Activated CD8-positive, alpha-beta T cell treated with anti-CD3 and anti-CD28 coated beads, Interleukin-2, amount 10 ng/mL, durations not matched to agents 7 days and 5 days (primary cell): ENCODE measurements at regions of chr2 and their contacts with region 1.

Region 1: DNA sequence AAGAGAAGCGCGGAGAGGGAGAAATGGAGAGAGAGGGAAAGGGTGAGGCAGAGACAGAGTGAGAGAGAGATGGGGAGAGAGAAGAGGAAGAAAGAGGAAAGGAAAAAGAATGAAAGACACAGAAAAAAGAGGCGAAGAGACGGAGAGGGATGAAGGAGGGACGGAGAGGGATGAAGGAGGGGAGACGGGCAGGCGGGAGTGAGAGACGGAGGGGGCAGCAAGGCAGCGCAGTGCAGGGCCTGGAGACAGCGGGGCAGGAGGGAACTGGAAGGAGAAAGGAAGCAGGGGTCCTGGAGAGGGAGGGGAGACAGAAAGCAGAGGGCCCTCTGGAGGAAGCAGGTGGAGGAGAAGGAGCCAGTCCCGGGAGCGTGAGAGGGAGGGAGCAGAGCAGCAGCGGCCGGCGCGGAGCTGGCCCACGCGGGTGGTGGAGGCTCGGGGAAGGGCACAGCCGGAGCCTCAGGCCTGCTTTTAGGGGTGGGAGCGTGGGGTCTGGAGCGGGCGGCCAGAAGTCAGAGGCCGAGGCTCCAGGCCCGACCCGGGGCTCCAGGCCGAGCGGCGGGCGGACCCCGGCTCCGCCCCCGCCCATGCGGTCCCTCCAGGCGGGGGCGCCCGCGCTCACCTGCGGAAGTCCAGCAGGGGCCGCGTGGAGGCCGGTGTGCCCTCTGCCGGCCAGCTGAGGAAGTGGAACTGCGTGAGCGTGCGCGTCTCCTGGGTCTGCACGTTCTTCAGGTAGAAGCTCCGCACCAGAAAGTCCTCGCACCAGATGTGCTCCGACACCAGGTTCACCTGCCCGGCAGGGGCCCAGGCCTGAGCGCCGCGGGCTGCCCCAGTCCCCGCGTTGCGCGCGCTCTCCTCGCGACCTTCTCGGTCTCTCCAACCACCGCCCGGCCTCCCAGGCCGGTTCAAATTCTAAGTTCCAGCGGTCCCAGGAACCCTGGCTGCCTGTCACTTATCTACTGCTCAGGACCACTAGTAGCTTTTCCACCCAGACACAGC is 14.5 kb downstream of the PTPRN start:
- DNase-seq: peak; percentile 91
- ATAC-seq: peak; percentile 89
- H3K4me3 Mint-ChIP-seq: peak overlapping the region; percentile 51
- H3K27ac Mint-ChIP-seq: peak overlapping the region; percentile 66
- H3K4me1 Mint-ChIP-seq: peaks cover 34% of the 10 kb centered on the region
- H3K27me3 Mint-ChIP-seq: peaks cover 6% of the 10 kb centered on the region

Region 2: DNA sequence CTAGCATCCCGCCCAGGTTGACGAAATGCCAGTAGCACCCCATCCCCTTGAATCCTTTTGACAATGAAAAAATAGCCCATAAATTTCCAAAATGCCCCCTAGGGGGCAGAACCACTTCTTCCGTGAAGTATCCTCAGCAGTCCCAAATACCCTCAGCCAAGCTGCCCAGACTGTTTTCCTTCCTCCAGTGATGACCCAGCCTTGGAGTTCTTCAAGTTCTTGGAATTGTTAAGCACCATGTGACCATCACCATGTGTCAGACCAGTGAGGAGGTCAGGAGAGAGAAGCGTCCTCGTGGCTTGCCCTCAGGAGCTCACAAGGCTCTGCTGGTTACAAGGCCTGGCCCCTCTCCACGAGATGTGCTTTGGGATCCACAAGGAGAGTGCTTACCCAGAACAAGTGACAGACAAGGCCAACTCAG is 123.4 kb before region 1 on chr2:
- CTCF ChIA-PET with region 1: interaction called, 32 read pairs
- POLR2A ChIA-PET with region 1: interaction called, 3 read pairs
- DNase-seq: peak; percentile 54
- ATAC-seq: peak; percentile 50
- H3K4me3 Mint-ChIP-seq: no peak overlapping the region
- H3K27ac Mint-ChIP-seq: no peak overlapping the region
- H3K4me1 Mint-ChIP-seq: peaks cover 30% of the 10 kb centered on the region
- H3K27me3 Mint-ChIP-seq: no peaks in the 10 kb centered on the region

Region 3: GRCh38 chr2:219218732-219219701 is 75.6 kb before region 1 on chr2 and contains the start of gene ABCB6:
- CTCF ChIA-PET with region 1: interaction called, 10 read pairs
- POLR2A ChIA-PET with region 1: no interaction called
- DNase-seq: peak; percentile 87
- ATAC-seq: peak; percentile 77
- H3K4me3 Mint-ChIP-seq: peak within 1 kb of the TSS; percentile 77
- H3K27ac Mint-ChIP-seq: peak within 1 kb of the TSS; percentile 75
- H3K4me1 Mint-ChIP-seq: peaks cover 26% of the 10 kb centered on the region
- H3K27me3 Mint-ChIP-seq: no peaks in the 10 kb centered on the region
- total RNA-seq, gene ABCB6: 11.6 to 11.9 TPM

Region 4: DNA sequence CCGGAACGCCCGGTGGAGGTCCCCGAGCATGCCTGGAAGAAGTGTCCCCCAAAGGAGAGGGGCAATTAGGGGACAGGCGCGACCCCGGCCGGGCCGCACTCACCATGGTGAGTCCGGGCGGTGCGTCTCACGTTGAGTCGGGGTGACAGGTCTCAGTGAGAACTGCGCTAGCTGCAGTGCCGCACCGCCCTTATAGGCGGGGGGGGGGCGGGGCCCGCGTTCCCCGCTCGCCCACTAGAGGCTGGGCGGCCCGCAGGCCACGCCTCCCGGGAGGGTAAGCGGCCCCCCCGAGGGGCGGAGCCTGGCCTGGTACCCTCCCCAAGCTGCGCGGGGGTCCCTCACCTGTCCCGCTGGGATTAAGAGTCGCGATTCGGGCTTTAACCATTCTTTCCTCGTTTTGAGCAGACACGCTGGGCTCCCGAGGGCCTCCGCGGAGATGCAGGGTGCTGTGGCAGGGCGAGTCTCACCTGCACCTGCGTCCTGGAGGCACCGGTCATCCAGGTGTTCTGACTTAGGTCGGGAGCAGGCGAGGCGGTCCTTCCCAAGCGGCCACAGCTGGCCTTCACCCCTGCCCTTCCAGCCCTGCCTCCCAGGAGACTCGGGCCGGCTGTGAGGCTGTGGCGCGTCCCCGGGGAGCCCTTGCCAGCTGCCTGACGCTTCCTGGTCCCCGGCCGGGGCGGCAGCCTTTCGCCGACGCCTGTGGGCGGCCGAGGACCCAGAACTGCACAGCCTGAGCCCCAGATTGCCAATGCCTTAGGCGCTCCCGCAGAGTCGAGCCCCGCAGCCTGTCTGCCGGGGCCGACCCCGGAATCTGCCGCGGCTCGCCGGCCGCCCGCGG is 40.7 kb before region 1 on chr2 and contains the start of gene TUBA4A:
- CTCF ChIA-PET with region 1: interaction called, 60 read pairs
- POLR2A ChIA-PET with region 1: interaction called, 29 read pairs
- DNase-seq: peak; percentile 91
- ATAC-seq: peak; percentile 80
- H3K4me3 Mint-ChIP-seq: peak within 1 kb of the TSS; percentile 99
- H3K27ac Mint-ChIP-seq: peak within 1 kb of the TSS; percentile 100
- H3K4me1 Mint-ChIP-seq: peaks cover 44% of the 10 kb centered on the region
- H3K27me3 Mint-ChIP-seq: no peaks in the 10 kb centered on the region
- total RNA-seq, gene TUBA4A: 286 to 292 TPM

Region 5: DNA sequence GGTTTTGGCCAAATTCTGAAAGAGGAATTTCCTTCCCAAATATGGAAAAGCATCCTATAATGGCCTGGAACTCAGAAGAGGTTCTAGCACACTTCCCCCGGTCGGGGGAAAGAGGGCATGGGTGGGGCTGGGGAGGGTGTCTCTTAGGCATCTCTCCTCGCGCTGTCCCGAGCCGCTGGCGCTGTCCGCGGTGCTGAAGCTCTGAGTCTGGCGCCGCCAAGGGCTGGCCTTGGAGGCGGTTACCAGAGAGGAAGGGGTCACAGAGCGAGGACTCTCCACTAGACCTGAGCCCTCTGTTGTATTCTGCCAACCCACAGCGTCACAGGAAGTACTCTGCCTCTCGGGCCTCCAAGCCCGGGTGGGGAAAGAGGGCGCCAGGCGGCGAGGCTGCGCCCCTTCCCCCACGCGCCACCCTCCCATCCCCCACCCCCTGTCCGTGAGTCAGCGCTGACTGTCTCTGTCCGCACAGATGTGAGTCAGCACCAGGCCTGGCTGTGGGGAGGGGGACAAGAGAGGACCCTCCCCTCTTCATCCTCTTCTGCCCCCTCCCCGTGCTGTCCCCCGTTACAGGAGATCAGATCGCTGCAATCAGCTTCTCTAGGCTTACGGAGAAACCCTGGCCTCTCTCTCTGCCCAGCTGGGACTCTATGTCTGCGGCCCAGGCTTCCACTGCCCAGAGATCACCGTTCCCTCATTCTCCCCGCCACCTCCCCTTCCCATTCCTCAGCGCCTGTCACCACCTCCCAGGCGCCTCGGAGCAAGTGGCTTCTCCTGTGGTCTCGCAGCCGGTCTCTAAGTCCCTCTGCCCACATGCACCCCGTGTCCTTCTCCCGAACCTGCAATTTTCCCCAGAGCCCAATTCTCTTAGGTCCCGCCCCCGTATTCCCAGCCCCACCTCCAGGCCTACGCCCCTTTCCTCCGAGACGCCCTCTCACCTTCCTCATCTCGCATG is 13.8 kb after region 1 on chr2:
- CTCF ChIA-PET with region 1: interaction called, 24 read pairs
- POLR2A ChIA-PET with region 1: interaction called, 3 read pairs
- DNase-seq: peak; percentile 83
- ATAC-seq: peak; percentile 96
- H3K4me3 Mint-ChIP-seq: no peak overlapping the region
- H3K27ac Mint-ChIP-seq: no peak overlapping the region
- H3K4me1 Mint-ChIP-seq: no peaks in the 10 kb centered on the region
- H3K27me3 Mint-ChIP-seq: peaks cover 41% of the 10 kb centered on the region

Region 6: DNA sequence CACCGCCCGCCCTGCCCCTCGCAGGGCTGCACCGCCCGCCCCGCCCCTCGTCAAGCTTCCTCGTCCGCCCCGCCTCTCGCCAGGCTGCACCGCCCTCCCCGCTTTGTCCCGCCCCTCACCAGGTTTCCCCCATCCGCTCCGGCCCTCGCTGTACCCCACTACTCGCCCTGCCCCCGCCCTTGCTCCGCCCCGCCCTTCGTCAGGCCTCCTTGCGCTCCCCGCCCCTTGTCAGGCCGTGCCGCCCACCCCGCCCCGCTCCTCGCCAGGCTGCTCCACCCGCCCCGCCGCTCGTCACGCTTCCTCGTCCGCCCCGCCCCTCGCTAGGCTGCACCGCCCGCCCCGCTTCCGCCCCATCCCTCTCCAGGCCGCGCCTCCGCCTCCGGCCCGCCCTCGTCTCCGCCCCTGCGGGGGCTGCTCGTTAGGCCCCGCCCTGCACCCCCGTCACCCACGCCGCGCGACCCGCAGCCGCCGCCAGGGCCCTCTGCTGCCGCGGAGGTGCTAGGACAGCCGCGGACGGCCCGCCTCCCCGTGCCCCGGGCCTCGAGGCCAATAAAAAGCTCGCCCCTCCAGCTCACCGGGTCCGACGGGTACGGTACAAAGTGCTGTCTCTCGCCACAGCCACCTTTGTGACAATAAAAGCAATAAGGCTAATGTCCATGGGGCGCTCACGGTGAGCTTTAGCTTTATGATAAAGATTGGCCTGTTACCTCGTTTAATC is 93.6 kb after region 1 on chr2:
- CTCF ChIA-PET with region 1: interaction called, 16 read pairs
- POLR2A ChIA-PET with region 1: no interaction called
- DNase-seq: peak; percentile 99
- ATAC-seq: peak; percentile 77
- H3K4me3 Mint-ChIP-seq: peak overlapping the region; percentile 70
- H3K27ac Mint-ChIP-seq: peak overlapping the region; percentile 87
- H3K4me1 Mint-ChIP-seq: peaks cover 18% of the 10 kb centered on the region
- H3K27me3 Mint-ChIP-seq: peaks cover 5% of the 10 kb centered on the region